CD4-positive, alpha-beta memory T cell (primary cell): ENCODE measurements at regions of chr11 and their contacts with region 1.

Region 1: GRCh38 chr11:65111744-65112414 is at the start of gene TM7SF2:
- DNase-seq: peak; percentile 91 to 96 (median 93)
- H3K4me3 ChIP-seq: peak within 1 kb of the TSS; percentile 36 to 66
- H3K4me3 Mint-ChIP-seq: peak within 1 kb of the TSS; percentile 88 to 96 (median 88)
- H3K27ac ChIP-seq: peak within 1 kb of the TSS; percentile 59
- H3K27ac Mint-ChIP-seq: peak within 1 kb of the TSS; percentile 90 to 96 (median 91)
- H3K4me1 ChIP-seq: peaks cover 45% of the 10 kb centered on the region
- H3K4me1 Mint-ChIP-seq: peaks cover 14 to 52% (median 39%) of the 10 kb centered on the region in 4 donors
- H3K27me3 ChIP-seq: no peaks in the 10 kb centered on the region
- H3K27me3 Mint-ChIP-seq: no peaks in the 10 kb centered on the region
- total RNA-seq, gene TM7SF2: 22.4 to 27.2 TPM

Region 2: DNA sequence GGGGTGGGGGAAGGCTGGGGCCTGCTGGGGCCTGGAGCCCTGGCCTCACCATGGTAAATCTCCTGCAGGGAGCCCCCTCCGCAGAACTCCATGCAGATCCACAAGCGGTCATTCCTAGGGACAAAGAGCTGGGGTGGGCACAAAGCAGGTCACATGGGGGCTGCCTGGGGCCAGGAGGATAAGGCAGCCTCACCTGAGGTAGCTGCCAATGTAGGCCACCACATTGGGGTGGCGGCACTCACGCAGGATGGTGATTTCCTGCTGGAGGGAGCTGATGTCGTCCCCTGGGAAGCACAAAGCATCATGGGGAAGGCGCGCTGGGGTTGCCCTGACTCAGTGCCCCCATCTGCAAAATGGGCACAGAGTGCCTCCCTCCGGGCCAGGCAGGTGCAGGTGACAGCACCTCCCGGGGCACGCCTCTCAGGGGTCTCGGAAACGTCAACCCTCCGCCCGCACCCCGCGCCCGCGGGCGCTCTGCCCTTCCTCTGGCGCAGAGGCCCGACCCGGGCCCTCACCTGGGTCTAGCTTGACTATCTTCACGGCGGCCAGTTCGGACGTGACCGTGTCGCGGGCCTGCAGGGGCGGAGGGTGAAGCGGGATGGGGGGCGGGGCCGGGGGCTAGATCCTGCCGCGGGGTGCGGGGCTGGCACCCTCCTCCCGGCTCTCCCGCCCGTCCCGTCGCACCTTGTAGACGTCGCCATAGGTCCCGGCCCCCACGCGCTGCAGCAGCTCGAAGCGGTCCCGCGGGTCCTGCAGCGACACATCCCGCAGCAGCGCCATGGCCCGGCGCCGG is 309.3 kb before region 1 on chr11:
- CTCF ChIA-PET with region 1: no interaction called
- POLR2A ChIA-PET with region 1: no interaction called
- intact Hi-C with region 1: no loop called
- DNase-seq: peak in 4 of 5 donors; percentile 31 to 68 (median 44)
- H3K4me3 ChIP-seq: peak overlapping the region in 1 of 2 donors; percentile 57
- H3K4me3 Mint-ChIP-seq: peak overlapping the region; percentile 80 to 86 (median 83)
- H3K27ac ChIP-seq: peak overlapping the region; percentile 79
- H3K27ac Mint-ChIP-seq: peak overlapping the region; percentile 57 to 93 (median 91)
- H3K4me1 ChIP-seq: peaks cover 35% of the 10 kb centered on the region
- H3K4me1 Mint-ChIP-seq: peaks cover 9 to 43% (median 23%) of the 10 kb centered on the region in 4 donors
- H3K27me3 ChIP-seq: no peaks in the 10 kb centered on the region
- H3K27me3 Mint-ChIP-seq: no peaks in the 10 kb centered on the region

Region 3: DNA sequence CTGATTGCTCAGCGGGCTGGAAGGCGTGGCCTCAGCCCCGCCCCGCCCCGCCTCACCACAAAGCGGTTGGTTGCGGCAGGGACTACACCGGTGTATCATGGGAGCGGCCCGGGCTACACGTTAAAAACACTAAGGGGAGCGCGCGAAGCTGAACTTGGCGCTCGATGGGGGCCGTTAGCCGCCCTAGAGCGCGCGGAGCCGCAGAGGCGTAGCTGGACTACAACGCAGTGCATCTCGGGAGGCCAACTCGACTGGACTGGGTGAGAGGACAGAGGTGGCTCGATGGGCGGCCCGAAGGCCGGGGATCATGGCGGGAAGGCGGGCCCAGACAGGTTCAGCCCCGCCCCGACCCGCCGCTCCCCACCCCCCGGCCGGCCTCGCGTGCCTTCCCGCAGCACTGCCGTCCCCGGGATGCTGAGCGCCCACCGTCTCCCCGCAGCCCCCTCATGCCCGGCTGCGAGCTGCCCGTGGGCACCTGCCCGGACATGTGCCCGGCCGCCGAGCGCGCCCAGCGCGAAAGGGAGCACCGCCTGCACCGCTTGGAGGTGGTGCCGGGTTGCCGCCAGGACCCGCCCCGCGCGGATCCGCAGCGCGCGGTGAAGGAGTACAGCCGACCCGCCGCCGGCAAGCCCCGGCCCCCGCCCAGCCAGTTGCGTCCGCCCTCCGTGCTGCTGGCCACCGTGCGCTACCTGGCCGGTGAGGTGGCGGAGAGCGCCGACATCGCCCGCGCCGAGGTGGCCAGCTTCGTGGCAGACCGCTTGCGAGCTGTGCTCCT is 70.8 kb before region 1 on chr11 and contains the start of gene SAC3D1:
- CTCF ChIA-PET with region 1: no interaction called
- POLR2A ChIA-PET with region 1: interaction called, 12 read pairs
- intact Hi-C with region 1: loop called (anchors 2 kb)
- DNase-seq: peak; percentile 87 to 91 (median 90)
- H3K4me3 ChIP-seq: peak within 1 kb of the TSS; percentile 61 to 64
- H3K4me3 Mint-ChIP-seq: peak within 1 kb of the TSS; percentile 92 to 97 (median 94)
- H3K27ac ChIP-seq: peak within 1 kb of the TSS; percentile 61
- H3K27ac Mint-ChIP-seq: peak within 1 kb of the TSS; percentile 87 to 97 (median 95)
- H3K4me1 ChIP-seq: peaks cover 25% of the 10 kb centered on the region
- H3K4me1 Mint-ChIP-seq: peaks cover 5 to 24% (median 15%) of the 10 kb centered on the region in 4 donors
- H3K27me3 ChIP-seq: no peaks in the 10 kb centered on the region
- H3K27me3 Mint-ChIP-seq: no peaks in the 10 kb centered on the region
- total RNA-seq, gene SAC3D1: 9.4 to 10.5 TPM

Region 4: GRCh38 chr11:65095974-65096806 is 15.7 kb before region 1 on chr11 and contains the start of gene VPS51:
- CTCF ChIA-PET with region 1: interaction called, 70 read pairs
- POLR2A ChIA-PET with region 1: interaction called, 320 read pairs
- intact Hi-C with region 1: loop called (anchors 1 kb)
- DNase-seq: peak; percentile 87 to 92 (median 89)
- H3K4me3 ChIP-seq: peak within 1 kb of the TSS; percentile 47 to 74
- H3K4me3 Mint-ChIP-seq: peak within 1 kb of the TSS; percentile 86 to 95 (median 93)
- H3K27ac ChIP-seq: peak within 1 kb of the TSS; percentile 78
- H3K27ac Mint-ChIP-seq: peak within 1 kb of the TSS; percentile 95 to 97 (median 96)
- H3K4me1 ChIP-seq: peaks cover 18% of the 10 kb centered on the region
- H3K4me1 Mint-ChIP-seq: peaks cover 8 to 26% (median 17%) of the 10 kb centered on the region in 4 donors
- H3K27me3 ChIP-seq: no peaks in the 10 kb centered on the region
- H3K27me3 Mint-ChIP-seq: no peaks in the 10 kb centered on the region
- total RNA-seq, gene VPS51: 221 to 226 TPM

Region 5: GRCh38 chr11:65159012-65159411 is 47.1 kb after region 1 on chr11:
- CTCF ChIA-PET with region 1: no interaction called
- POLR2A ChIA-PET with region 1: no interaction called
- intact Hi-C with region 1: no loop called
- DNase-seq: no peak
- H3K4me3 ChIP-seq: no peak overlapping the region
- H3K4me3 Mint-ChIP-seq: no peak overlapping the region
- H3K27ac ChIP-seq: no peak overlapping the region
- H3K27ac Mint-ChIP-seq: no peak overlapping the region
- H3K4me1 ChIP-seq: no peaks in the 10 kb centered on the region
- H3K4me1 Mint-ChIP-seq: no peaks in the 10 kb centered on the region
- H3K27me3 ChIP-seq: no peaks in the 10 kb centered on the region
- H3K27me3 Mint-ChIP-seq: peaks cover 0 to 4% of the 10 kb centered on the region in 2 donors

Region 6: DNA sequence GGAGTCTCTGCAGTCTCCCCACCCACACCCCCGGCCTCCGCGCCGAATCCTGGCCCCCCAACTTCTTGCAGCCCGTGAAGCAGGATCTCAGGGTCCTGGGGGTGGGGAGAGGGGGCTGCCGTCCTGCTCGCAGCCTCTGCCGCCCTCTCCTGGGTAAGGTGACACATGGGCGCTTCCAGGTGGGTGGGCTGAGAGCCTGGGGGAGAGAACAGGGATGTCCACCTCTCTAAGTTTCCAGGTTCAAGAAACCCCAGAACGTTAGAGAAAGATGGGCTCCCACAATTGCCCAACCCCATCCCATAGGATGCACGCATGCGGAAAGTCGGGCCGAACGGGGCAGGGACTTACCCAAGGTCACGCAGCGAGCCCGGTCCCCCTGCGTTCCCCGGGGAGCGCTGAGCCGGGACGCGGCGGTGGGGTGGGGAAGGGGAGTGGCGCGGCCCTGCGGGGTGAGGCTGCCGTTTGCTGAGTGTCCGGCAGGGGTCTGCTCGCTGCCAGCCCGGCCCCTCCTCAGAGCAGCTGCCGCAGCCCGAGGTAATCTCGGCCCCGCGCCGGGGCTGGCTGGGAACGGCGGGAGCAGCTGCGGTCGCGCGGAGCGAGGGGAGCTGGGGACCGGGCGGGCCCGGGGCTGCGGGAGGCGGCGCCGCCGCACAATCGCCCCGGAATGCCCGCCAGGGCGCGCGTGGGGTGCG is 69.1 kb after region 1 on chr11:
- CTCF ChIA-PET with region 1: interaction called, 33 read pairs
- POLR2A ChIA-PET with region 1: interaction called, 32 read pairs
- intact Hi-C with region 1: loop called (anchors 1 kb)
- DNase-seq: peak; percentile 48 to 70 (median 54)
- H3K4me3 ChIP-seq: peak overlapping the region; percentile 61 to 70
- H3K4me3 Mint-ChIP-seq: peak overlapping the region; percentile 89 to 93 (median 90)
- H3K27ac ChIP-seq: peak overlapping the region; percentile 52
- H3K27ac Mint-ChIP-seq: peak overlapping the region in 6 of 7 donors; percentile 79 to 94 (median 87)
- H3K4me1 ChIP-seq: peaks cover 36% of the 10 kb centered on the region
- H3K4me1 Mint-ChIP-seq: peaks cover 11 to 37% (median 22%) of the 10 kb centered on the region in 4 donors
- H3K27me3 ChIP-seq: no peaks in the 10 kb centered on the region
- H3K27me3 Mint-ChIP-seq: no peaks in the 10 kb centered on the region

Region 7: GRCh38 chr11:65329944-65330403 is 218.1 kb after region 1 on chr11:
- CTCF ChIA-PET with region 1: no interaction called
- POLR2A ChIA-PET with region 1: no interaction called
- intact Hi-C with region 1: loop called (anchors 5 kb)
- DNase-seq: peak; percentile 69 to 81 (median 75)
- H3K4me3 ChIP-seq: no peak overlapping the region
- H3K4me3 Mint-ChIP-seq: peak overlapping the region in 3 of 8 donors; percentile 28 to 64 (median 43)
- H3K27ac ChIP-seq: no peak overlapping the region
- H3K27ac Mint-ChIP-seq: peak overlapping the region in 4 of 7 donors; percentile 53 to 86 (median 68)
- H3K4me1 ChIP-seq: peaks cover 11% of the 10 kb centered on the region
- H3K4me1 Mint-ChIP-seq: peaks cover 8 to 22% (median 14%) of the 10 kb centered on the region in 4 donors
- H3K27me3 ChIP-seq: no peaks in the 10 kb centered on the region
- H3K27me3 Mint-ChIP-seq: peaks cover 0 to 2% of the 10 kb centered on the region in 2 donors